AG04449 (cell line): ENCODE measurements at regions of chr3 and their contacts with region 1.

Region 1: GRCh38 chr3:146218880-146219866 is 31.7 kb downstream of the PLSCR4 start:
- DNase-seq: no peak
- H3K4me3 ChIP-seq: no peak overlapping the region
- CTCF ChIP-seq: no peak

Region 2: GRCh38 chr3:146026547-146026946 is 192.6 kb before region 1 on chr3:
- CTCF ChIA-PET with region 1: no interaction called
- POLR2A ChIA-PET with region 1: no interaction called
- DNase-seq: no peak
- H3K4me3 ChIP-seq: no peak overlapping the region
- CTCF ChIP-seq: no peak

Region 3: GRCh38 chr3:146195030-146195429 is 24.1 kb before region 1 on chr3:
- CTCF ChIA-PET with region 1: interaction called, 19 read pairs
- POLR2A ChIA-PET with region 1: no interaction called
- DNase-seq: no peak
- H3K4me3 ChIP-seq: no peak overlapping the region
- CTCF ChIP-seq: no peak

Region 4: DNA sequence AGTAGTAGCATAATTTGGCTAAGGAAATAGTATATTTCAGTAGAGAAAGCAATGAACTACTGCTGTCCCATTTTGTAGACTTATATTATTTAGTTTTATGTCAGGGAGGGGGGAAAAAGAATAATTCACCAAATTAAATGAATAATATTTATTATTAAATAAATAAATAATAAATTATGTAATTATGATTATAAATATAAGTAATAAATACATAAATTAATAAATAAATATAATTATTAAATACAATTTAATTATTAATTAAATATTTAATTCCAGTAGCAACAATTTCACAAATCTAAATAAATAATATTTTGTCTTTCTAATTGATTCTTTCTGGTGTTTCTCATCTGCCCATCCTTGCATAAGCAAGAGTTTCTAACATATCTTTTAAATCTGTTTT is 112.8 kb after region 1 on chr3:
- CTCF ChIA-PET with region 1: interaction called, 100 read pairs
- POLR2A ChIA-PET with region 1: no interaction called
- DNase-seq: no peak
- H3K4me3 ChIP-seq: no peak overlapping the region
- CTCF ChIP-seq: no peak

Region 5: GRCh38 chr3:146503461-146504202 is 284.5 kb after region 1 on chr3:
- CTCF ChIA-PET with region 1: no interaction called
- POLR2A ChIA-PET with region 1: no interaction called
- DNase-seq: peak; percentile 74
- H3K4me3 ChIP-seq: no peak overlapping the region
- CTCF ChIP-seq: no peak

Region 6: DNA sequence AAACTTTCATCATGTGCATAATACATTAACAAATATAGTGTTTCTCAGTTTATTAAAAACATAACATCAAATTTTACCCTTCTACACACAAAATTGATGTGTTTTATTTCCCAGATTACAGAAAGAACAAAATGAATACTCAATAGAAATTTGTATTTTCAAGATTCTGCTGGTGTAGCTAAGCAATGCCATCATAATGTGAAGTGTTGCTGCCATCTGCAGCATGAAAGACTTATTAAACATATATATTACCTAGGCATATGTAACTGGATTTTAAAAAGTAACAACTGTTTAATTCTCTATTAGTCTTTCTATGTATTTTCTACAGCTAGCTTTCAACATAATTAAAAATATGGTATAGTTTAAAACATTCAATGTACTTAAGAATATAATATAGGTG is 358.5 kb after region 1 on chr3:
- CTCF ChIA-PET with region 1: interaction called, 23 read pairs
- POLR2A ChIA-PET with region 1: no interaction called
- DNase-seq: no peak
- H3K4me3 ChIP-seq: no peak overlapping the region
- CTCF ChIP-seq: no peak